SK-N-SH (cell line): ENCODE measurements at regions of chr11 and their contacts with region 1.

Region 1: DNA sequence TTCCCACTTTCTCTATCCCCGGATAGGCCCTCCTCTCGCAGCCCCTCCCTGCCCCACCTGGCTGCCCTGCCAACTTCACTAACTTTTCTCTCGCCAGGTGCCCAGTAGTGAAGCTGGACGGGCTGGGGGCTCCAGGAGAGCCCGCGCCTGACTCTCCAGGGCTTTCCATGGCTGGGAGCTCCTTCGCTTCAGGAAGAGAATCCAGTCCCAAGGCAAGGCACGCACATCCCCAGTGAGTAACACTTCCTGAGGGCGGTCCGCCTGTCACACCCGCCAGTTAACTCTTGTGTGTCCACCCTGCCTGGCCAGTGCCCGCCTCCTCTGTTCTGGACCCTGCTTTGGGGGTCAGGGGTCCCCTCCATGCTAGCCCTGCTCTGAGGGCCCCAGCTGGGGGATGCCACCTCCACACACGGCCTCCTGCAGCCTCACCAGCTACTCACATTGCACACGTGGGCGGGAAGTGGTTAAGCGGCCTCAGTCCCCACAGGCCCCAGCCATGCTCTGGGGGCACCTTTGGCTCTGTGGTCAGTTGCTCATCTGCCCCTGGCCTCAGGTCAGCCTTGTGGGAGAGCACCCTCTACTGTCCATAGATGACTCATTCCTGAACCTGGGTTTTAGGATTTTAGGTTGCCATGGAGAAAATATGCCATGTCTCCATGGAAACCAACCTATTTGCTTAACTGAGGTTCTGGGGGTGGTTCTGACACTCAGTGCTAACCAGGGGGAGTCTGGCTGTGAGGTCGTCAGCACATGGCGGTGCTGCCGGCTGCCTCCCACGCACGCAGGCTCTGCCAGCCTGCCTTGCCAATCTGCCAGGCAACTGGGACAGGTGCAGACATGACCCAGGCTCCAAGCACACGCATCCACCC is at the start of gene RIN1:
- DNase-seq: peak; percentile 94
- H3K4me3 ChIP-seq: peak within 1 kb of the TSS; percentile 68 to 69
- H3K27ac ChIP-seq: peak within 1 kb of the TSS; percentile 94
- H3K4me1 ChIP-seq: peaks cover 27 to 44% of the 10 kb centered on the region in 2 experiments
- H3K27me3 ChIP-seq: no peaks in the 10 kb centered on the region
- CTCF ChIP-seq: peak; percentile 56
- EP300 ChIP-seq: peak; percentile 47 to 78; a peak in 3 of 4 replicates
- RAD21 ChIP-seq: peak; percentile 81
- polyA plus RNA-seq, gene RIN1: 13.0 and 16.9 TPM in 2 replicates

Region 2: GRCh38 chr11:66288671-66289547 is 47.6 kb before region 1 on chr11 and contains the start of gene YIF1A:
- CTCF ChIA-PET with region 1: interaction called, 15 read pairs
- POLR2A ChIA-PET with region 1: interaction called, 3 read pairs
- DNase-seq: peak; percentile 98
- H3K4me3 ChIP-seq: peak within 1 kb of the TSS; percentile 88 to 90
- H3K27ac ChIP-seq: peak within 1 kb of the TSS; percentile 93 to 97
- H3K4me1 ChIP-seq: peaks cover 7 to 36% of the 10 kb centered on the region in 2 experiments; a peak in 2 of 4 replicates
- H3K27me3 ChIP-seq: no peaks in the 10 kb centered on the region
- CTCF ChIP-seq: no peak
- EP300 ChIP-seq: no peak
- RAD21 ChIP-seq: no peak
- polyA plus RNA-seq, gene YIF1A: 115 and 123 TPM in 2 replicates

Region 3: DNA sequence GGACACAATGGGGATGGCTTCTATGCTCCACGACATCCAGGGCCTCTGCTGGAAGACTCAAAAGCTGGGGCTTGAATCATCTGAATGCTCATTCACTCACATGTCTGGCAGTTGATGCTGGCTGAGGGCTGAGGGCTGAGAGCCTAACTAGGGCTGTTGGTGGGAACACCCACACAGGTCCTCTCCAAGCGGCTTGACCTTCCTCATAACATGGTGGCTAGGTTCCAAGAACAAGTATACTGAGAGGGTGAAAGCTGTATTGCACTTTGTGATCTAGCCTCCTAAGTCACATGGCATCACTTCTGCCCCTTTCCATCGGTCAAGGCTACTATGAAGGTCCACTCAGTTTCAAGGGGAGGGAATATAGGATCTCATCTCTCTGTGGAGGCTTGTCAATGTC is 37.3 kb before region 1 on chr11:
- CTCF ChIA-PET with region 1: interaction called, 11 read pairs
- POLR2A ChIA-PET with region 1: no interaction called
- DNase-seq: no peak
- H3K4me3 ChIP-seq: no peak overlapping the region
- H3K27ac ChIP-seq: no peak overlapping the region
- H3K4me1 ChIP-seq: no peaks in the 10 kb centered on the region
- H3K27me3 ChIP-seq: no peaks in the 10 kb centered on the region
- CTCF ChIP-seq: no peak
- EP300 ChIP-seq: no peak
- RAD21 ChIP-seq: no peak